A673 (cell line): ENCODE measurements at regions of chr14 and their contacts with region 1.

Region 1: GRCh38 chr14:51780006-51780692 is 80.3 kb upstream of the GNG2 start:
- DNase-seq: peak; percentile 78
- H3K4me3 ChIP-seq: no peak overlapping the region
- H3K27ac ChIP-seq: no peak overlapping the region
- H3K4me1 ChIP-seq: no peaks in the 10 kb centered on the region
- H3K27me3 ChIP-seq: no peaks in the 10 kb centered on the region
- CTCF ChIP-seq: peak; percentile 86

Region 2: DNA sequence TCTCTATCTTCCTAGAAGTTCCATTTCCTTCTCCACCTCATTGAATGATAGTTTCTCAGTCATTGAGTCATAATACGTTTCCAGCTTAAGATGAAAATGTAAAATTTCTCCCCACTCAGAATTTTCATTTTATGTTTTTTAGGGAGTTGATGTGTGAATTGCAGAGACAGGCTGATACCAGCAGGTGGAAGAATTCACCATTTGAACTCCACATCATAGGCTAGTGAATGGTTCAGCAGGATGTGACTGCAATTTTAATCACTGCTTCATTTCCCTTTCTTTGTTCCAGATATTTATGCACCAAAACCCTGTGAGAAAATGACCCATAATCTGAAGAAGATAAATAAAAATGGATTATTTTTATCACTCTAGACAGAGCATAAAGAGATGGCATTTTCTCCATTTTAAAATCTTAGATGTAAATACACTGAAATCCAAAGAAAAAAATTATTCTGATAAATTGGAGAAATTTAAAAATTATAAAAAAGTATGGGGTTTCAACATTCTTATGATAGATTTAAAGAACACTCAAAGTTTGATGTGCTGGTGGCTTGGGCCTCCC is 825.3 kb before region 1 on chr14:
- CTCF ChIA-PET with region 1: no interaction called
- POLR2A ChIA-PET with region 1: no interaction called
- intact Hi-C with region 1: loop called (anchors 5 kb)
- DNase-seq: peak; percentile 87
- H3K4me3 ChIP-seq: no peak overlapping the region
- H3K27ac ChIP-seq: peak overlapping the region; percentile 78
- H3K4me1 ChIP-seq: peaks cover 17% of the 10 kb centered on the region
- H3K27me3 ChIP-seq: no peaks in the 10 kb centered on the region
- CTCF ChIP-seq: peak; percentile 83

Region 3: DNA sequence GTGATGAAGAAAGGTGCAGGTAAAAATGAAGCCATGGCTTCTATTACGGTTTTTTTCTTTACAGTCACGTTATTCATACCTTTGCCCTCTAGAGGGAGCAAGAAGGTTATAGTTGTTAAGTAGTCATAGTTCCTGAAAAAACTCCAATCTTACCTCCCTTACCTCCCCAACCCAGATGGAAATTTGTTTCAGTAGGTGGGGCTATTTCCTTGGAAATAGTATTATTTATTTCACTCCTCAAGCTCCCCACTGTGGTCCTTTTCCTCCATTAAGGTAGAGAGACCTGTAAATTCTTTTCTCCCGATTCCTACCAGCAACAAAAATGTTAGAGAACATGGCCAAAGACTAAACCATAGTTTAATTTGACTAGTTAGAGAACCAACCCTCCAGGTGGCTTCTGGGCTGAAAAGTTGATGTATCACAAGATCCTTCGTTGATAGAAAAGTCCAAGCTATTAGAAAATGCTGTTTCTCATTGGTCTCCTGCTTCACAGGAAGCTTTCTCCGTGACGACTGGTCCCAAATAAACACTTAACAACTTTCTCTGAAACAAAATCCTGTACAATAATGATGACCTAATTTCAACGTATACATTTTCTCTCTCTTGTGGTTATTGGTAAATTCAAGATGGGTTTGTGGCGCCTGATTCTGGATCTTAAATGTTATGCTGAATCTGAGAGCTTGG is 496.6 kb before region 1 on chr14:
- CTCF ChIA-PET with region 1: interaction called, 29 read pairs
- POLR2A ChIA-PET with region 1: no interaction called
- intact Hi-C with region 1: loop called (anchors 1 kb)
- DNase-seq: peak; percentile 85
- H3K4me3 ChIP-seq: no peak overlapping the region
- H3K27ac ChIP-seq: no peak overlapping the region
- H3K4me1 ChIP-seq: no peaks in the 10 kb centered on the region
- H3K27me3 ChIP-seq: no peaks in the 10 kb centered on the region
- CTCF ChIP-seq: peak; percentile 79

Region 4: DNA sequence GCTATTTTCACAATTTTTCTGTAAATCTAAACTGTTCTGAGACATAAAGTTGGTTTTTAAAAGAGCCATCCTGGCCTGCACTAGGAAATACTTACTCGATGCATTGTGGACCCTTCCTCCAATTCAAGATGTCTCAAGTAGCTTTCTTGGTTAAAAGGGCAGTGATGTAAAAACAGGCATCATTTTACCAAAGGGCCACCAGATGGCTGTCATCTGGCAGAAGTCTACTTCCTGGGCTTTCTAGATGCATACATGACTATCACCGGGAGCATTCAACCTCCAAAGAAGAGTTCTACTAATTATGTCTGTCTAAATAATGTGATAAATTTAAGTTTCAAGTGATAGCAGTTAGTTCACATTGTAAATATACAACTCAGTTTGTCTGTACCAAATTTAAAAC is 225.2 kb before region 1 on chr14:
- CTCF ChIA-PET with region 1: no interaction called
- POLR2A ChIA-PET with region 1: no interaction called
- intact Hi-C with region 1: no loop called
- DNase-seq: no peak
- H3K4me3 ChIP-seq: no peak overlapping the region
- H3K27ac ChIP-seq: no peak overlapping the region
- H3K4me1 ChIP-seq: no peaks in the 10 kb centered on the region
- H3K27me3 ChIP-seq: no peaks in the 10 kb centered on the region
- CTCF ChIP-seq: 0 out of 2 replicates have a peak, but pooled peaks have one; percentile 36

Region 5: DNA sequence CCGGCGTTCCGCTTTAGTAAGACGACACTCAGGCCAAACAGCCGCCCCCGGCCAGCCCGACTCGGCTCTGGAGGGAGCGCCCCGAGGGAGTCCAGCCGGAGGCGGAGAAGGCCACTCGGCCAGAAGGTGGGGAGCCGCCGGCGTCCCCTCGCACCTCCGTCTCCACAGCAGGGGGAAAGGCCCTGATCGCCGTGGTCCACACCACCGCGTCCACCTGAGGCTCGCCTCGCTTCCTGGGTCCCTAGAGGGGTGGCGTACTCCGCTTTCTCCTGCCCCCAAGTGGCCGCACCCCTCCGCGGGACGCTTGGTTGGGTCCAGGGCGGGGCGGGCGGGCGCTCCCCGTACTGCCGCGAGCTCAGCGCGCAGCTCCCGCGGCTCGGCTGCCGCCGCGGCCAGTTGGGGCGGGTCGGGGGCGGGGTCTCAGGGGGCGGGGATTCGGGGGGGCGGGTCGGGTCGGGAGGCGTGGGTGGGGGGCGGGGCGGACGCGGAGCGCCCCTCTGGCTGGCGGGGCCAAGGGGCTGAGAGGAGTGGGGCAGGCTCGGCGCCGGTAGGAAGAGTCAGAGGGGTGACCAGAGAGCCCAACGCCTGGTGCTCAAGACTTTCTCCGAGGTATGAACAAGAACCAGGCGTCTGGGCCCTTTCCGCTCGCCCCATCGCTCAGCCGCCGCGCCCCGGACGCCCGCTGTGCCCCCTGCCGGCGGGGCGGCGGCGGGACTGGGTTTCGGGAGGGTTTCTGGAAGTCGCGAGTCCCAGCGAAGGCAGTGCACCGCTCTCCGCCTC is 128.6 kb before region 1 on chr14 and contains the start of gene FRMD6:
- CTCF ChIA-PET with region 1: interaction called, 11 read pairs
- POLR2A ChIA-PET with region 1: no interaction called
- intact Hi-C with region 1: loop called (anchors 2 kb)
- DNase-seq: peak; percentile 90
- H3K4me3 ChIP-seq: peak within 1 kb of the TSS; percentile 95
- H3K27ac ChIP-seq: peak within 1 kb of the TSS; percentile 95
- H3K4me1 ChIP-seq: peaks cover 31% of the 10 kb centered on the region
- H3K27me3 ChIP-seq: no peaks in the 10 kb centered on the region
- CTCF ChIP-seq: peak; percentile 72
- total RNA-seq, gene FRMD6: 22.0 and 27.6 TPM in 2 replicates

Region 6: GRCh38 chr14:51979088-51979709 is 199.1 kb after region 1 on chr14:
- CTCF ChIA-PET with region 1: interaction called, 3 read pairs
- POLR2A ChIA-PET with region 1: no interaction called
- intact Hi-C with region 1: loop called (anchors 2 kb)
- DNase-seq: peak; percentile 83
- H3K4me3 ChIP-seq: no peak overlapping the region
- H3K27ac ChIP-seq: no peak overlapping the region
- H3K4me1 ChIP-seq: no peaks in the 10 kb centered on the region
- H3K27me3 ChIP-seq: no peaks in the 10 kb centered on the region
- CTCF ChIP-seq: peak; percentile 97

Region 7: DNA sequence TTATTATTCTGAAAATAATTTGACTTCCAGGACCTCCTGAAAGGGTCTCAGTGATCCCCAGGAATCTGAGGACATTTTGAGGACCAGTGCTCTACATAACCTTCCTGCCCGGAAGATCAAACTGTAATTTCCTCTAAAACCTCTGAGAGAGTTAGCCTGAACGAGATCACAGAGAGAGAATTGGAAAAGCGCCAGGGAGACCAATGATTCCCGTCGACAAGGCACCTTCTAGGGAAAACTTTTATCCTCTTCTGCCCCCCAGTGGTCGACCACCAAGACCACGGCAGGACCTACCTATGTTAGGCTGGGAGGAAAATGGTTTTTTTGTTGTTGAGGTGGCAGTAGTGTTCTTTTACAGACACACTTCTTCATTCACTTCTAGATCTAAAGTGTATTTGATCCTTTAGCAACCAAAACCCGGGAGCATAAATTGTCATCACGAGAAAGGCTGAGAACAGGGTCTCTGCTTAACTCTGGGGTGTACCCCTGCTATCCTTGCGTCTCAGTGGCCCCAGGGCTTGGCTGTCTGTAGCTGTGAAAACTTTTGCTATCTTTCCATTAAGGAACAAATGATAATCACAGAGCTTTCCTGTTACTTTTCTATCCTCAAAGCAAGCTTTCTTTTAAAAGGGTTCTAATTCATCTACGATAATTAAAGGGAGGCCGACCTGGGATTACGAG is 351.6 kb after region 1 on chr14:
- CTCF ChIA-PET with region 1: no interaction called
- POLR2A ChIA-PET with region 1: no interaction called
- intact Hi-C with region 1: loop called (anchors 2 kb)
- DNase-seq: peak; percentile 93
- H3K4me3 ChIP-seq: no peak overlapping the region
- H3K27ac ChIP-seq: no peak overlapping the region
- H3K4me1 ChIP-seq: no peaks in the 10 kb centered on the region
- H3K27me3 ChIP-seq: no peaks in the 10 kb centered on the region
- CTCF ChIP-seq: peak; percentile 80